Mammary epithelial cell (primary cell): ENCODE measurements at regions of chr18 and their contacts with region 1.

Region 1: DNA sequence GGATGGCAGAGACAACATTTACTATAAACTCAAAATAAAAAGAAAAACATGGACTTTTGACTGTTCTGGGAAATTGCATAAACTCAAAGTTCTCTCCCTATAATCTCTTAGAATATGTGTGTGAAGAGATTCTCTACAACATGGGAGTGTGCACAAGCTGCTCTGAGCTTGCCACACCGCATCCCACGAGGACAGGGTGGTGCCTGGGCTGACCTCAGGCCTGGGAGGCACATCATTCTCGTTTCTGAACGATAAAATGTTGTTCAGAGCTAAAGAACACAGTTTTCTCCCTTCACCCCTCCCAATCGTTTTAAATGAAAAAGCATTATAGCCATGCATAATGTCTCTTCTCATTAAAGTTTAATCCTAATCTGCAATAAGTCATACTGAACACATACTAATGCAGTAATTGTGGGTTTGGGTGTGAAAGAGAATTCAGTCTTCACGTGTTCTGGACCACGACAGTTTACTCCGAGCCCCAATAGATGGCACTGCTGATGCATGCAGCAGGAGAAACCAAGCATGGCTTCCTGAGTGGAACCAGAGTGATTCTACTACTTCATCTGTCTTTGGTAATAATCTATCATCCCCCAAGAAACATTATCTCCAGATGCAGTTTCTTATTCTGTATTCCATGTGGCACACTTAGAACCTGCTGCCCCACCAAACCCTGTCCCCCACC is 46.9 kb upstream of the LAMA1 start:
- DNase-seq: no peak
- H3K4me3 ChIP-seq: no peak overlapping the region
- H3K27ac ChIP-seq: no peak overlapping the region
- H3K4me1 ChIP-seq: no peaks in the 10 kb centered on the region
- H3K27me3 ChIP-seq: no peaks in the 10 kb centered on the region
- CTCF ChIP-seq: peak in 1 of 2 donors; percentile 30

Region 2: GRCh38 chr18:6929370-6930102 is 234.9 kb before region 1 on chr18:
- CTCF ChIA-PET with region 1: no interaction called
- dilution Hi-C with region 1: loop called (anchors 25 kb)
- in situ Hi-C with region 1: no loop called
- intact Hi-C with region 1: no loop called
- DNase-seq: no peak
- H3K4me3 ChIP-seq: no peak overlapping the region
- H3K27ac ChIP-seq: no peak overlapping the region
- H3K4me1 ChIP-seq: no peaks in the 10 kb centered on the region
- H3K27me3 ChIP-seq: no peaks in the 10 kb centered on the region
- CTCF ChIP-seq: no peak

Region 3: GRCh38 chr18:7021994-7022840 is 142.2 kb before region 1 on chr18:
- CTCF ChIA-PET with region 1: no interaction called
- dilution Hi-C with region 1: loop called (anchors 10 kb)
- in situ Hi-C with region 1: no loop called
- intact Hi-C with region 1: no loop called
- DNase-seq: peak; percentile 61
- H3K4me3 ChIP-seq: no peak overlapping the region
- H3K27ac ChIP-seq: no peak overlapping the region
- H3K4me1 ChIP-seq: no peaks in the 10 kb centered on the region
- H3K27me3 ChIP-seq: no peaks in the 10 kb centered on the region
- CTCF ChIP-seq: peak; percentile 69

Region 4: GRCh38 chr18:7117390-7118355 is 46.8 kb before region 1 on chr18 and contains the start of gene LAMA1:
- CTCF ChIA-PET with region 1: no interaction called
- dilution Hi-C with region 1: loop called (anchors 5 kb)
- in situ Hi-C with region 1: no loop called
- intact Hi-C with region 1: loop called (anchors 5 kb)
- DNase-seq: no peak
- H3K4me3 ChIP-seq: peak within 1 kb of the TSS; percentile 74 to 92 (median 83)
- H3K27ac ChIP-seq: no peak within 1 kb of the TSS
- H3K4me1 ChIP-seq: peaks cover 5% of the 10 kb centered on the region
- H3K27me3 ChIP-seq: no peaks in the 10 kb centered on the region
- CTCF ChIP-seq: peak in 1 of 2 donors; percentile 1
- total RNA-seq, gene LAMA1: 48.4 to 104 TPM

Region 5: GRCh38 chr18:7234091-7234490 is 69.6 kb after region 1 on chr18:
- CTCF ChIA-PET with region 1: no interaction called
- dilution Hi-C with region 1: no loop called
- in situ Hi-C with region 1: no loop called
- intact Hi-C with region 1: no loop called
- DNase-seq: no peak
- H3K4me3 ChIP-seq: no peak overlapping the region
- H3K27ac ChIP-seq: no peak overlapping the region
- H3K4me1 ChIP-seq: no peaks in the 10 kb centered on the region
- H3K27me3 ChIP-seq: peaks cover under 1% of the 10 kb centered on the region
- CTCF ChIP-seq: no peak